Activated CD8-positive, alpha-beta T cell treated with anti-CD3 and anti-CD28 coated beads, Interleukin-2, amount 10 ng/mL, durations not matched to agents 7 days and 5 days (primary cell): ENCODE measurements at regions of chr6 and their contacts with region 1.

Region 1: GRCh38 chr6:136643850-136644596 is 93.8 kb upstream of the MAP7 start:
- DNase-seq: peak; percentile 86
- ATAC-seq: peak; percentile 74
- H3K4me3 Mint-ChIP-seq: no peak overlapping the region
- H3K27ac Mint-ChIP-seq: no peak overlapping the region
- H3K4me1 Mint-ChIP-seq: no peaks in the 10 kb centered on the region
- H3K27me3 Mint-ChIP-seq: no peaks in the 10 kb centered on the region

Region 2: DNA sequence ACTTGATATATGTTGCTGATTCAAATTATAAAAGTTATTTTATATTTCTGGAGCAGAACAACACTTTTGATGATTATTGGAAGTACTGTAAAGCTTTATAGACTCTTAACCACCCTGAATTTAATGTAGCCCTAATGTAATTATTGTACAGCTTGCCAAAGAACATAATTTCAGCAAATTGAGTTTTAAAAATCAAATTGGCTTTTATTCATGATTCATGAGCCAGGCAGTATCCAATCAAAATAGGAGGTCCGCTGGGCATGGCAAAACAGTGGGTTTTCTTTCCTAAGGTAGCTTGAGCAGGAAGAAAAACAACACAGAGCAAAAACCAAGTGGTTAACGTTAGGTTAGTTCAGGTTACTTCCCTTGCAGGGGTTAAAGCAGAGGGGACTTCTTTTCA is 29.0 kb before region 1 on chr6:
- CTCF ChIA-PET with region 1: interaction called, 11 read pairs
- POLR2A ChIA-PET with region 1: no interaction called
- DNase-seq: no peak
- ATAC-seq: no peak
- H3K4me3 Mint-ChIP-seq: no peak overlapping the region
- H3K27ac Mint-ChIP-seq: no peak overlapping the region
- H3K4me1 Mint-ChIP-seq: peaks cover 6% of the 10 kb centered on the region
- H3K27me3 Mint-ChIP-seq: no peaks in the 10 kb centered on the region

Region 3: DNA sequence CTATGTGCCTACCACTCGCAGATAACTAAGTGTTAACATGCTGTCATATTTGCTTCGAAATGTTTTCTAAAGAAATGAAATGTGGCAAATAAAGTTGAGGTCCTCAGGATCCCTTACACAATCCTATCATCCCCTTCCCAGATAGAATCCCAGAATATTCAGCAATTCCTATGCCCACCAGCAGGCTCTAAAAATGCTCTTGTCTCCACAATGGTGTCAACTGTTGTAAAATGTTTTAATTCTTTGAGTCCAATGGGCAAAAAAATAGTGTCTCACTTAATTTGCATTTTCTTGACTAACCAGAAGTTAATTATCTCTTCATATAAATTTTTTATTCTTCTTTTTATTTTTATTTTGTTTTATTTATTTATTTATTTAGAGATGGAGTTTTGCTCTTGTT is 10.1 kb after region 1 on chr6:
- CTCF ChIA-PET with region 1: interaction called, 12 read pairs
- POLR2A ChIA-PET with region 1: no interaction called
- DNase-seq: no peak
- ATAC-seq: no peak
- H3K4me3 Mint-ChIP-seq: no peak overlapping the region
- H3K27ac Mint-ChIP-seq: no peak overlapping the region
- H3K4me1 Mint-ChIP-seq: peaks cover 12% of the 10 kb centered on the region
- H3K27me3 Mint-ChIP-seq: no peaks in the 10 kb centered on the region

Region 4: DNA sequence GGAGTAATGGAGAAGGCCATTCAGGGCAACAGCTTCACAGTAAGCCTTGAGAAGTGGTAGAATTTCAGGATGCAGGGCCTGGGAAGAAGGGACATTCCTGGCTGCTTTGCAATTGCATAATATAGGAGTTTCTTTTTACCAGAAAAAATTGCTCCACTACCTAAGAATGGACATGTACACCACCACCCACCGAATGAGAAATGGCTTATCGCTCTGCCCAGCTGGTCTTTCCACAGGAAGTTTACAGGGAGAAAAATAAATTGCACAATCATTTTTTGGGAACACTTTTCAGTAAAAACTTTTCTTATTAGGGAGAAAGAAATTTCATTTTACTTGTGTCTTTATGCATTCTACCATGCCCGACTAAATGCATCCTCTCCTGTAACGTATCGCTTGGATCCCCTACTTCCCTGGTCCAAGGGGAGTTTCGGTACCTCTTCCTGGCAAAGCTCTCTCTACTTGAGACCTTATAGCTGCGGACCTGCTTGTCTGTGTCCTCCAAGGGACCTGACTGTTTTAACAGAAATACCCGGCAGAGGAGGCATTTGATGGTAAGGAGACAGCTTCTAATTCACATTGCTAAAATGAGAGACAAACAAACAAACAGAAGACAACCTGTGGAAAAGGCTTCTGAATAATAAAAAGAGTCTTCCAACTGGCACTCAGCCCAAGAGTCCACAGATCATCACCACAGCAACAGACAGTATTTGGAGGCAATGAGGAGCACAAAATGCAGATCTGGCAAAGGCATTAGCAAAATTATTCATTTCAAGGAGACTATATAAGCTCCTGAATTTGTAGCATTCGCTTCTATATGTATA is 94.1 kb after region 1 on chr6:
- CTCF ChIA-PET with region 1: interaction called, 14 read pairs
- POLR2A ChIA-PET with region 1: no interaction called
- DNase-seq: no peak
- ATAC-seq: no peak
- H3K4me3 Mint-ChIP-seq: no peak overlapping the region
- H3K27ac Mint-ChIP-seq: no peak overlapping the region
- H3K4me1 Mint-ChIP-seq: peaks cover 15% of the 10 kb centered on the region
- H3K27me3 Mint-ChIP-seq: no peaks in the 10 kb centered on the region

Region 5: DNA sequence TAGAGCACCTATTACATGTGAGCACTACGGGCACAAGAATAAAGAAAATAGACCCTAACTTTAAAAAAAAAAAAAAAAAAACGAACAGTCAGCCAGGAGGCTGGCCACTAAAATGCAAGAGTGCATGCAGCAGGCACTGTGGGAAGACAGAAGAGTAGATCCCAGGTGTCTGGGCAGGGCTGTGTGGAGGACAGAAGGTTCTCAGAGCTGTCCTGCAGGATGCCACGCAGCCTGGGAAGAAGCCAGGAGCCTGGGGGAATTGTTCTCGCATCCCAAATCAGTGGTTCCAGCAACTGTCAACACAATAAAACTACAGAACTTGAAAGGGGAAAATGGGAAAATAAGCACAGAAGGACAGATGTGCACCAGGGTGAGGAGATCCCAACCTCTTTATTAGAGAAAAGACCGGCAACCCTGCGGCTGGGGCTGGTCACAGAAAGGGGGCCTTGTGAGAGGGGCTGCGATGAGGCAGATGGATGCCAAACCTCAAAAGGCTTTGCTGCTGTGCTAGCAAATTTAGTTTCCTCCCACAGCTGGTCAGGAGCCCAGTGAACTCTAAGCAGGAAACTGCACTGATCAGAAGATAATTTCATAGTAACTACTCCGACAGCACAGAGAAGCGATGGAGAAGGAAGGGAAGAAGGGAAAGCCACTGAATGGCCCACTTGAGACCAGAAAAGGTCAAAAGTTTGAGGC is 117.4 kb after region 1 on chr6:
- CTCF ChIA-PET with region 1: interaction called, 25 read pairs
- POLR2A ChIA-PET with region 1: no interaction called
- DNase-seq: peak; percentile 47
- ATAC-seq: peak; percentile 54
- H3K4me3 Mint-ChIP-seq: peak overlapping the region; percentile 23
- H3K27ac Mint-ChIP-seq: peak overlapping the region; percentile 63
- H3K4me1 Mint-ChIP-seq: peaks cover 63% of the 10 kb centered on the region
- H3K27me3 Mint-ChIP-seq: no peaks in the 10 kb centered on the region

Region 6: DNA sequence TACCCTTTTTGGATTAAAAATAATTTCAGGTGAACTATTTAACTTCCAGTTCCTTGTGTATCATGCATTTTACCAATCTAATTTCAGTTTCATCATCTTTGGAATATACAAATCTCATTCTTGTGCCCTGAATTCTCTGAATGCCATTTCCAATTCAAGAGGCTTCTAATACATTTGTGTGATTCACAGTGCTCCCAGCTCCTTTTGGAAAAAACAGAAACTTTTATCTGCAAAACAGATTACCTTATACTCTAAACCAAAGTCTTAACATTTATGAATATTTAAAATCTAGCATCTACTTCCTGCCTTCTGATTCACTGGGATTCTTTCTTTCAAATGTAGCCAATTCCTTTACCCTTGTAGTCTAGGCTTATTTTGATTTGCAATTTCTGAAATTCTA is 167.2 kb after region 1 on chr6:
- CTCF ChIA-PET with region 1: interaction called, 11 read pairs
- POLR2A ChIA-PET with region 1: no interaction called
- DNase-seq: no peak
- ATAC-seq: no peak
- H3K4me3 Mint-ChIP-seq: no peak overlapping the region
- H3K27ac Mint-ChIP-seq: no peak overlapping the region
- H3K4me1 Mint-ChIP-seq: peaks cover 3% of the 10 kb centered on the region
- H3K27me3 Mint-ChIP-seq: no peaks in the 10 kb centered on the region